Cardiac septum (tissue), 1 donor: ENCODE measurements at regions of chr1 and their contacts with region 1.

Region 1: GRCh38 chr1:114979278-114979891 is 50.2 kb upstream of the TSHB start:
- DNase-seq: no peak

Region 2: DNA sequence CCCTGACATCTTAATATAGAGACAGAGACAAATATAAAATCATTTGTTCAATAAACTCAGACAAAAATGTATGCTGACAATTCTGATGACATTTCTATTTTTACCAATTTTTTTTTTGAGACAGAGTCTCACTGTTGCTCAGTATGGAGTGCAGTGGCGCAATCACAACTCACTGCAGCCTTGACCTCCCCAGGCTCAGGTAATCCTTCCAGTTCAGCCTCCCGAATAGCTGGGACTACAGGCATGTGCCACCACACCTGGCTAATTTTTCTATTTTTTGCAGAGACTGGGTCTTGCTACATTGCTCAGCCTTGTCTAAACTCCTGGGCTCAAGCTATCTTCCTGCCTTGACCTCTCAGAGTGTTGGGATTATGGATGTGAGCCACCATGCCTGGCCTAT is 185.3 kb before region 1 on chr1:
- intact Hi-C with region 1: no loop called
- DNase-seq: no peak

Region 3: GRCh38 chr1:115052454-115053083 is 73.2 kb after region 1 on chr1:
- intact Hi-C with region 1: loop called (anchors 5 kb)
- DNase-seq: no peak

Region 4: DNA sequence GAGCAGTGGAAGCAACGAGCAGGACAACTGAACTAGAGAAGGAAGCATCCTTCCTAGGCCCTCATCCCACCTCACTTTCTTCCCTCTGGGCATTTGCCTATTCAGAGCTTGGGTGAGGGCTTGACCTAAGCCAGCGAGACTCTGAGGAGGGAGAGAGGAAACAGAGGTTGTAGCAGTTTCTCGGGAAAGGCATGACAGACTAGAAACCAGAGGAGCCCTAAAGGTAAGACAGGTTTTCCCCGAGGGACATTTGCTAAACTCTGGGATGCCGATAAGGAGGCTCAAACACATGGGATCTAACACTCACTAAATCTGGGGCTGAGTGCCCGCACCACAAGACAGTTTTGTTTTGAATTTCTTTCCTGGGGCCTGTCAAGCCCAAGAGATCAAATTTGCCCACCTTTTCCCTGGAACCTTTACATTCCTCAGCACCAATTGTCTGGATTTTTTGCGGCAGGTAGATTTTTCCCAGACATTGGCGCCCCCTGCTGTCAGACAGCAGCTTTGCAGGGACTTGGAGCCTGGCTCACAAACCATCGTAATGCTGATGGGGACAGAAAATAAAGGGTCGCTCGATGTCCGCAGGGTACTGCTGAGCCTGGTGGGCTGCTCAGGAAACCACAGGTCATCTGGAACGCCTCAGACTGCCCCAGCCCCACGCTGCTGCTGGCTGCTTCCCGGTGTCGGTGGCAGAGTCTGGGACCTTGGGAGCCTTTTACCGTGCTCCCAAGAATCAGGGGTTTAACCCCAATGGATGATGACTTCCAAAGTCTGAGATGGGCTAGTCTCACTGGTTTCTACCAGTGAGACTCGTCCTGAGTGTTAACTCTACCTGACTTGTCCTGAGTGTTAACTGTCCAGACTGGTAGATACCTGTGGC is 133.4 kb after region 1 on chr1:
- intact Hi-C with region 1: loop called (anchors 2 kb)
- DNase-seq: no peak

Region 5: DNA sequence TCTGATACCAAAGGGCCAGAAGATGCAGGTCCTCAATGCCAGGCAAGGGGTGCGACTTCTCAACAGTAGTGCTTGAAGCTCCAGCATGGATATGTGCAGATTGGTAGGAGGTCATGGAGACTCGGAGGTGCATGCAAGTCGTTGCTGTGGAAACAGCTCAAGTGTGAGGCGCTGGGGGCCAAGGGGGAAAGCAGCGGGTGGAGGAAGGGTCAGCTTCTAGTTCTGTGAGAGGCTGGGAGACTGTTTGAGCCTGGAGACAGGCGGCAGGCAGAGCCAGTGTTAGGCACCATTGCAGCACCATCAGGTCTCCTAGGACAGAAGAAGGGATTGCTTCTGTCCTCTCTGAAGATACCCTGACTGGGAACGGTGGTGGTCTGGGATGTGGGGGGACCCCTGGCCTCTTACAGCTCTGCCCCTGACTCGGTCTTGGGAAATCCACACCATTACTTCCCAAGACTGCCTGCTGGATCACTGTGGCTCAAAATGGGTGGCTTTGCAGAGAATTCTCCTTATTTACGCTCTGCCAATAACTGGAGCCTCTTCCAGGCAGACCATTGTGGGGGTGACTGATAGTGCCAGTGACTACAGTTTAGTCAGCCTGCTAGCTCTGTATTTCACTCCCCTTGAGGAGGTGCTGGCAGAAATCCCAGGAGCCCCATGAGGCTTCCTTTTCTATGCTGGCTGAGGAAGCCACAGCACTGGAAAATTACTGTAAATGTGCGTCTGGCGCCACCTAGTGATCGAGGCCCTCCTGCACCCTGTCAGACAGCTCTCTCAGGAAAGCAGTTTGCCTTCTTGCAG is 616.1 kb after region 1 on chr1:
- intact Hi-C with region 1: loop called (anchors 5 kb)
- DNase-seq: peak; percentile 88